ENCODE measurements at regions of chr3 and their contacts with region 1.

Region 1: DNA sequence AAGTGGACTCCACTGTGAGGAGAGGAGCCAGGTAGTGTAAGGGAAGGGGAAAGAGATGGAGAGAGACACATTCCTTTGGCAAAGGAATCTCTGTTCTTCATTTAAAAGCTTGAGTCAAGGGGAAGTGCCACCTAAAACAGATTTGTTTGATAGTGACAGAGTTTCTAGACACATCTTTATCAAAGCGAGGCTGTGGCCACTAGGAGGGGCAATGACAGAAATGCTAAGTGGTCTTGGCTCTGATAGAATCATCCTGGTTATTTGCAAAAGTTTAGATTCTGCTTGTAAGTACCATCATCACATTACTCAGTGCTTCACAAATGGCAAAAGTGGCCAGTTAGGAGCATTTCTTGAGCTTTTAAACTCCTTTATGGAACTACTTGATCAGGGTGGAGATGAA is 261.4 kb downstream of the CNTN3 start:
- DNase-seq: no peak
- ATAC-seq: no peak
- H3K4me3 ChIP-seq: no peak overlapping the region
- H3K27ac ChIP-seq: no peak overlapping the region
- H3K4me1 ChIP-seq: no peaks in the 10 kb centered on the region
- H3K27me3 ChIP-seq: no peaks in the 10 kb centered on the region
- CTCF ChIP-seq: no peak
- EP300 ChIP-seq: no peak
- POLR2A ChIP-seq: no peak
- RAD21 ChIP-seq: no peak

Region 2: GRCh38 chr3:74883690-74884089 is 530.7 kb after region 1 on chr3:
- CTCF ChIA-PET with region 1: no interaction called
- POLR2A ChIA-PET with region 1: no interaction called
- RAD21 ChIA-PET with region 1: no interaction called
- SMC1A ChIA-PET with region 1: no interaction called
- in situ Hi-C with region 1: no loop called
- intact Hi-C with region 1: loop called (anchors 2 kb)
- DNase-seq: no peak
- ATAC-seq: peak; percentile 57
- H3K4me3 ChIP-seq: no peak overlapping the region
- H3K27ac ChIP-seq: no peak overlapping the region
- H3K4me1 ChIP-seq: no peaks in the 10 kb centered on the region
- H3K27me3 ChIP-seq: no peaks in the 10 kb centered on the region
- CTCF ChIP-seq: peak in 2 of 3 experiments; percentile 21 to 37; a peak in 2 of 6 replicates
- EP300 ChIP-seq: no peak
- POLR2A ChIP-seq: no peak
- RAD21 ChIP-seq: no peak

Measured in GM12878 (cell line).